GM12878 (cell line): ENCODE measurements at regions of chr2 and their contacts with region 1.

Region 1: DNA sequence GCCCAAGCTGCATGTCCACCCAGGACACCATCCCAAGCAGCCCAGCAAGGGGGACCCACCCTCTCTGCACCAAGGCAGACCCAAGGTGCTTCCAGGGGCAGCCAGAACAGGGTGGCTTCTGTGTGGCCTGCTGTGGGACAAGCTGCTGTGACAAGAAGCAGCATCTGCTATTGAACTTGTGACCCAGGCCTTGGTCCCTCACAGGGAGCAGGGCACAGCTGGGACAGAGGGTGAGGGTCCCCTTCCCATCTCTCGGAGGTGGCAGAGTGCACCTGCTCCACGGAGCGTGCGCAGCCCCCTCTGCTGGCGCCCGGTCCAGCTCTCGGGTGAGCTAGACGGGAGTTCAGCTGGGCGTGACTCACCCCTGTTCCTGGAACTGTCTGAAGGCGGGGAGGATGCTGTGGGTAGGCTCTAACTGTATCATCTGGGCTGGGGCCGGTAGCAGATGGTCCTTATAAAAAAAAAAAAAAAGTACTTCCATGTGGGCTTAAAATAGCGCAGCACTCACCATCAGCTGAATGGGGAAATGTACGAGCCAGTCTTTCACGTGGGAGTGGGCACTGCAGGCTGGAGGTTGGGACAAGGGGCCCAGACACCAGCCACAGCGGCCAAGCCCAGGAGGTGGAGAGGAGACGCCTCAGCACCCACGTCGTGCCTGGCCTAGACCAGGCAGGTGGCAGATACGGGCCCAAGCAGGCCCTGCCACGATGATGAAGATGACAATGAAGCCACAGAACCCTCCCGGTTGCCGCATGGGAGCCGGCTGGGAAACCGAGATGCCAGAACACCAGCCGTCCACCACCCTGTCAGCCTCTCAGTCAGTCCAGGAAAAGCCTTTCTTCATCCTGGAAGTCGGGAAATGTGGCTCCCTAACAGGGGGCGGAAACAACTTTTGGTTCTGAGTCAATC is 136.8 kb upstream of the ID2 start:
- DNase-seq: peak; percentile 62
- ATAC-seq: peak; percentile 71
- H3K4me3 ChIP-seq: no peak overlapping the region
- H3K27ac ChIP-seq: peak overlapping the region; percentile 95
- H3K4me1 ChIP-seq: peaks cover 56% of the 10 kb centered on the region
- H3K27me3 ChIP-seq: no peaks in the 10 kb centered on the region
- CTCF ChIP-seq: peak; percentile 44 to 66 (median 54); a peak in 5 of 6 replicates
- EP300 ChIP-seq: peak; percentile 8 to 64; a peak in 2 of 4 replicates
- POLR2A ChIP-seq: peak; percentile 29
- RAD21 ChIP-seq: peak; percentile 60

Region 2: GRCh38 chr2:8004250-8004681 is 540.8 kb before region 1 on chr2:
- CTCF ChIA-PET with region 1: no interaction called
- POLR2A ChIA-PET with region 1: interaction called, 3 read pairs
- RAD21 ChIA-PET with region 1: no interaction called
- SMC1A ChIA-PET with region 1: no interaction called
- in situ Hi-C with region 1: no loop called
- intact Hi-C with region 1: loop called (anchors 2 kb)
- DNase-seq: no peak
- ATAC-seq: peak; percentile 46
- H3K4me3 ChIP-seq: no peak overlapping the region
- H3K27ac ChIP-seq: no peak overlapping the region
- H3K4me1 ChIP-seq: peaks cover 4% of the 10 kb centered on the region; the same call in 1 of the 2 replicates
- H3K27me3 ChIP-seq: no peaks in the 10 kb centered on the region
- CTCF ChIP-seq: no peak
- EP300 ChIP-seq: peak; percentile 69 to 79; a peak in 2 of 4 replicates
- POLR2A ChIP-seq: no peak
- RAD21 ChIP-seq: no peak

Region 3: GRCh38 chr2:8477552-8478470 is 67.2 kb before region 1 on chr2:
- CTCF ChIA-PET with region 1: interaction called, 15 read pairs
- POLR2A ChIA-PET with region 1: interaction called, 7 read pairs
- RAD21 ChIA-PET with region 1: interaction called, 39 read pairs
- SMC1A ChIA-PET with region 1: interaction called, 19 read pairs
- in situ Hi-C with region 1: no loop called
- intact Hi-C with region 1: loop called (anchors 2 kb)
- DNase-seq: peak; percentile 95
- ATAC-seq: peak; percentile 52
- H3K4me3 ChIP-seq: peak overlapping the region; percentile 43; the same call in 1 of the 2 replicates
- H3K27ac ChIP-seq: peak overlapping the region; percentile 62
- H3K4me1 ChIP-seq: peaks cover 68% of the 10 kb centered on the region
- H3K27me3 ChIP-seq: no peaks in the 10 kb centered on the region
- CTCF ChIP-seq: no peak
- EP300 ChIP-seq: peak; percentile 94 to 96
- POLR2A ChIP-seq: no peak
- RAD21 ChIP-seq: no peak

Region 4: DNA sequence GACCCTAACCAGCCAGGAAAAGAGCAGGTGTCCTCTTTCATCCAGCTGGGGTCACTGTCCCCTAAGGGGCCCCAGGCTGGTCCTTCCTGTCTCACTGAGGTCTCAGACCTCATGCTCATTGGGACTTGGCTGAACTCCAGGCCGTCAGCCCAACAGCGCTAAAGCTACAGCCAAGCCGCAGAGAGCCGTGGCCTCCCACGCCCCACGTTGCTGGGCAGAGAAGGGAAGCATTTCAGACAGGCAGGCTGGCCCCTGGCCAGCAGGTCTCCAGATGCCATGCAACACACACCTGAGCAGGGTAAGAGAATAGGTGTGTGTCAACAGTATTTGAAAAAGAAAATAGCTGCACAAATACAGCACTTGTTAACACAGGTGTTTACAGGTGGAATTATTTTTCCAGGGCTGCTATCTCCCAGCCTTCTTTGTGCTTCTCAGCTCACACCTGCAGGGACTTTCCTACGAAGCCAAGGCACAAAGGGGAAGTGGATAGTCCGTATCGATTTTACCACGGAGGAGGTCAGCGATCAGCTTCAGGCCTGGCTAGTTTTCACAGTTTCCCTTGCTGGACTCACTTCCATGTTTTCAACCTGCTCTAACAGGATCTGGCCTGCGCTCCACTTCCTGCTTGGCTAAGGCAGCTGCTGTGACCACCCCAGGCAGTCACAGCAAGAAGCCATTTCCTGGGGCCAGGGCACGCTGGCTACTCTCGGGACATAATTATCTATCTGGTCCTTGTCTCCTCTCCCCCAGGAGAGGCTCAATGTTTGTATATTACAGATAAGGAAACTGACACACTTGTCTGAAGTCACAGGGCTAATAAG is 19.2 kb before region 1 on chr2:
- CTCF ChIA-PET with region 1: interaction called, 64 read pairs
- POLR2A ChIA-PET with region 1: interaction called, 43 read pairs
- RAD21 ChIA-PET with region 1: interaction called, 322 read pairs
- SMC1A ChIA-PET with region 1: interaction called, 284 read pairs
- in situ Hi-C with region 1: no loop called
- intact Hi-C with region 1: loop called (anchors 1 kb)
- DNase-seq: peak; percentile 90
- ATAC-seq: peak; percentile 82
- H3K4me3 ChIP-seq: 0 out of 2 replicates have a peak overlapping the region, but pooled peaks have one; percentile 9
- H3K27ac ChIP-seq: peak overlapping the region; percentile 74
- H3K4me1 ChIP-seq: peaks cover 64% of the 10 kb centered on the region
- H3K27me3 ChIP-seq: no peaks in the 10 kb centered on the region
- CTCF ChIP-seq: peak; percentile 54 to 72 (median 58)
- EP300 ChIP-seq: peak in 1 of 2 experiments; percentile 80; a peak in 3 of 4 replicates
- POLR2A ChIP-seq: no peak
- RAD21 ChIP-seq: peak; percentile 88

Region 5: GRCh38 chr2:8583400-8584173 is 38.5 kb after region 1 on chr2:
- CTCF ChIA-PET with region 1: interaction called, 10 read pairs
- POLR2A ChIA-PET with region 1: interaction called, 3 read pairs
- RAD21 ChIA-PET with region 1: interaction called, 9 read pairs
- SMC1A ChIA-PET with region 1: interaction called, 16 read pairs
- in situ Hi-C with region 1: no loop called
- intact Hi-C with region 1: loop called (anchors 2 kb)
- DNase-seq: peak; percentile 80
- ATAC-seq: peak; percentile 95
- H3K4me3 ChIP-seq: peak overlapping the region; percentile 30; the same call in 1 of the 2 replicates
- H3K27ac ChIP-seq: peak overlapping the region; percentile 51; the same call in 1 of the 2 replicates
- H3K4me1 ChIP-seq: peaks cover 27% of the 10 kb centered on the region
- H3K27me3 ChIP-seq: no peaks in the 10 kb centered on the region
- CTCF ChIP-seq: no peak
- EP300 ChIP-seq: no peak
- POLR2A ChIP-seq: peak; percentile 52; the same call in 1 of the 2 replicates
- RAD21 ChIP-seq: no peak